ENCODE measurements at regions of chr14 and their contacts with region 1.

Region 1: DNA sequence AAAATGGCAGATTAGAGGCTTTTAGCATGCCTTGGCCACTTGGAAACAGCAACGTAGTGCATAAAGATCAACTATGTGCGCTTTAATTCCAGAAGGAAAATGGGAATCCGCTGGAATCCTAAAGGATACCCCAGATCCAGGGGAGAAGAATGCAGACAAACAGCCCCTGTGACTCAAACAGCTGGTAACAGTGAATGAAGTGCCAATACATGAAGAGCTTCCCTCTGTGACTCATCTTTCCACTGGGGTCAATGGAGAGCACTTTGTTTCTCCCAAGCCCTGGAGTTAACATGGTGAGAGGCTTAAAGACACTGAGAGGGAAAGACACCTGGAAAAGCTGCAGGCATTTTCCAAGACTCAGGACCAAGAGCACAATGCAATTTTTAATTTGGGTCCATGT is 263.1 kb downstream of the CEP128 start:
- DNase-seq: no peak
- H3K4me3 Mint-ChIP-seq: no peak overlapping the region
- H3K27ac Mint-ChIP-seq: no peak overlapping the region
- H3K4me1 Mint-ChIP-seq: no peaks in the 10 kb centered on the region
- H3K27me3 Mint-ChIP-seq: no peaks in the 10 kb centered on the region
- CTCF ChIP-seq: no peak

Region 2: DNA sequence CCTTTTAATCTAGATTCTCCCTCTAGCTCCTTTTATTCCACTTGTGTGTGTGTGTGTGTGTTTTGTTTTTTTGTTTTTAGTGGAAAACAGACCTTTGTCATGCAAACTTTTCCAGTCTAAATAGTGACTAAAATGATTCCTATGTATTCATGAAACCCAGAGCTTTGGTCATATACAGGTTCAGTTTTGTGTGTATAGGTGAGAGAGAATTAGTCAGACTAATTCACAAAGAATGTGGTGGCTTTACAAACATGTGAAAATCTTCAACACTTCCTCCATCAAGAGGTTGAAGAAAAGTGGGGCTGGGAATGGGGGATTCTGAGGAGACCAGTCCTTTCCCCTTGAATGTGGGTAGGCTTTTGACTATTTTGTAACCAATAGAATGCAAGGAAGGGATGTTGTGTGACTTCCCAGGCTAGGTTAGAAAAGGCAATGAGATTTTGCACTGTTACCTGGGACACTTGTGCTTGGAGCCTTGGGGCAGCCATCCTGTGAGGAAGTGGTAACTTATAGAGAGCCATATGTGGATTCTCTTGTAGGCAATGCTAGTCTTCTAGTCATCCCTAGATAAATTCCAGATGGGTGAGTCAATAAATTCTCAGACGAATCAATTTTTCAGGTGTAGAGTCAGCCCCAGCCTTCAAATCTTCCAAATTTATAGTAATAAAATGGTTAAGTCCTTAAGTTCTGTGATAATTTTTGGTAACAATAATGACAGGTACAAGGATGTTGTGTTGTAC is 27.0 kb after region 1 on chr14:
- CTCF ChIA-PET with region 1: no interaction called
- POLR2A ChIA-PET with region 1: no interaction called
- intact Hi-C with region 1: loop called (anchors 5 kb)
- DNase-seq: no peak
- H3K4me3 Mint-ChIP-seq: no peak overlapping the region
- H3K27ac Mint-ChIP-seq: no peak overlapping the region
- H3K4me1 Mint-ChIP-seq: peaks cover 5% of the 10 kb centered on the region
- H3K27me3 Mint-ChIP-seq: no peaks in the 10 kb centered on the region
- CTCF ChIP-seq: no peak

Region 3: DNA sequence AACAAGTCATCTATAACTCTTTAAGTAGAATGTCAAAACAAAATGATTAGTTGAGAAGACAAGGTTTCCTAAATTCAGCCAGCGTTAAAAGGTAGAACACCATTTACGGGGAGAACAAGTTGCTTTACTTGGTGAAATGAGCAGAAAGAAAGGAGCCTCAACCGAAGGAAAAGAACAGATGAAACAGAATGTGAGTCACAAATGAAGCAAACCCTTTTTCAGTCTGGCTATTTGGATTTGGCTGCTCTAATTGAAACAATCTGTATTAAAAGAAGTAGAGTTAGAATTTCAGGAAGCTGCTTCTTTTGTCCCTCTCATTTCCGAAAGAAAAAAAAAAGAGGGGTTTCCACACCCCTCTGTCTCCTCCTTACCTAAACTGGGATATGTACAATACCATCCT is 228.5 kb after region 1 on chr14:
- CTCF ChIA-PET with region 1: no interaction called
- POLR2A ChIA-PET with region 1: no interaction called
- intact Hi-C with region 1: no loop called
- DNase-seq: no peak
- H3K4me3 Mint-ChIP-seq: no peak overlapping the region
- H3K27ac Mint-ChIP-seq: no peak overlapping the region
- H3K4me1 Mint-ChIP-seq: no peaks in the 10 kb centered on the region
- H3K27me3 Mint-ChIP-seq: no peaks in the 10 kb centered on the region
- CTCF ChIP-seq: no peak

Measured in MCF 10A (cell line).